Naive thymus-derived CD4-positive, alpha-beta T cell (primary cell): ENCODE measurements at regions of chr4 and their contacts with region 1.

Region 1: GRCh38 chr4:121370729-121371325 is 10.0 kb downstream of the QRFPR start:
- DNase-seq: peak in 4 of 9 donors; percentile 5 to 23 (median 10)
- ATAC-seq: no peak
- H3K4me3 ChIP-seq: no peak overlapping the region
- H3K4me3 Mint-ChIP-seq: no peak overlapping the region
- H3K27ac ChIP-seq: no peak overlapping the region
- H3K27ac Mint-ChIP-seq: no peak overlapping the region
- H3K4me1 ChIP-seq: no peaks in the 10 kb centered on the region
- H3K4me1 Mint-ChIP-seq: no peaks in the 10 kb centered on the region
- H3K27me3 ChIP-seq: peaks cover 0 to 3% of the 10 kb centered on the region in 2 donors
- H3K27me3 Mint-ChIP-seq: peaks cover 9 to 30% (median 17%) of the 10 kb centered on the region in 5 donors

Region 2: DNA sequence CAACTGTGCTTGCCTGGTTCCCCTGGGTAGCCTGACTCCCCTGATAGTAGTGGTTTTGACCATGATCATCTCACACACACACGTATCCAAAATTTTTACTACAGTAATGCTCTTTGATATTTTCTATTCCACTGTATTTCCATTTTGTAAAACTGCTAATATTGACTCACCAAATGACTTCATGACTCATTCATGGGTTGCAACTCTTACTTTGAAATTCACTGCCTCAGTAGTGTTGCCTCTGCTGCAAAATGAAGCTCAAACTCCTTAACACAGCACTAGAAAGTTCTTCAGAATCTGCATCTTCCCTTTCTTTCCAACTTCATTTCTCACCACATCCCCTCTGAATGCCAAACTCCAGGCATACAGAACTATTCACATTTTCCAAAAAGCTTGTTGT is 10.3 kb before region 1 on chr4:
- CTCF ChIA-PET with region 1: no interaction called
- POLR2A ChIA-PET with region 1: no interaction called
- intact Hi-C with region 1: loop called in 1 of 2 experiments (anchors 1 kb)
- DNase-seq: no peak
- ATAC-seq: no peak
- H3K4me3 ChIP-seq: no peak overlapping the region
- H3K4me3 Mint-ChIP-seq: no peak overlapping the region
- H3K27ac ChIP-seq: no peak overlapping the region
- H3K27ac Mint-ChIP-seq: no peak overlapping the region
- H3K4me1 ChIP-seq: no peaks in the 10 kb centered on the region
- H3K4me1 Mint-ChIP-seq: peaks cover 0 to 3% (median 0%) of the 10 kb centered on the region in 7 donors
- H3K27me3 ChIP-seq: no peaks in the 10 kb centered on the region
- H3K27me3 Mint-ChIP-seq: peaks cover 15 to 35% (median 16%) of the 10 kb centered on the region in 5 donors

Region 3: GRCh38 chr4:121736735-121737351 is 366.0 kb after region 1 on chr4:
- CTCF ChIA-PET with region 1: interaction called, 4 read pairs
- POLR2A ChIA-PET with region 1: no interaction called
- intact Hi-C with region 1: loop called in 1 of 2 experiments (anchors 2 kb)
- DNase-seq: peak in 3 of 9 donors; percentile 7 to 24 (median 9)
- ATAC-seq: peak; percentile 29
- H3K4me3 ChIP-seq: no peak overlapping the region
- H3K4me3 Mint-ChIP-seq: no peak overlapping the region
- H3K27ac ChIP-seq: no peak overlapping the region
- H3K27ac Mint-ChIP-seq: no peak overlapping the region
- H3K4me1 ChIP-seq: no peaks in the 10 kb centered on the region
- H3K4me1 Mint-ChIP-seq: no peaks in the 10 kb centered on the region
- H3K27me3 ChIP-seq: no peaks in the 10 kb centered on the region
- H3K27me3 Mint-ChIP-seq: peaks cover 4 to 24% (median 8%) of the 10 kb centered on the region in 5 donors